Right ventricle myocardium inferior (tissue), 1 donor: ENCODE measurements at regions of chr2 and their contacts with region 1.

Region 1: GRCh38 chr2:18362696-18363349 is 197.6 kb downstream of the RDH14 start:
- DNase-seq: no peak
- ATAC-seq: no peak

Region 2: GRCh38 chr2:18149645-18150246 is 213.1 kb before region 1 on chr2:
- intact Hi-C with region 1: loop called (anchors 10 kb)
- DNase-seq: no peak
- ATAC-seq: no peak

Region 3: DNA sequence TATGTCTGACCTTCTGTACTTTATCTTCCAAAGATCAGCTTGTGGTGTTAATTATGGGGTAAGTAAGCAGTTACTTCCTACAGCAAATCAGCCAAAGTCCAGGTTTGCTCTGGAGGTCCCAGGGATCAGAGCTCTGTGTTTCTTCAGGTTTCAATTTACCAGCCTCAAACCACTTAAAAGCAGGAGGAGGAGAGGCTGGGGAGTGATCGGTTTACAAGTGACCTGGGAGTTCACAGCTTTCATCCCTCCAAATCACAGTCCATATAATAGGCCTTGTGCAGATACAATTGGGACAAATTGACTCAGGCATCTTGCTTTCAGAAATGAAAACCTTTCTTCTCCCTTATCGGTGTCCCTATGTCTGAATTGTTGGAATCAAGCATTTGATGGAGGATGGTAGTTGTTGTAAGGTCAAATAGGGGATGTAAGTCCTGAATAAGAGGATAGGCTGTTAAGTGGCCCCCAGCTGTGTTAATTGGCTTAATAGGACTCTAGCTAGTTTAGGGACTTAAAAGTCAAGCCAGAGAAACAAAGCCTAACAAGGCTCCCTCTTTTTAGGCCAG is 414.5 kb after region 1 on chr2:
- intact Hi-C with region 1: no loop called
- DNase-seq: no peak
- ATAC-seq: no peak